ENCODE measurements at regions of chr1 and their contacts with region 1.

Region 1: GRCh38 chr1:84772428-84772943 is 82.2 kb upstream of the SSX2IP start:
- ATAC-seq: peak; percentile 81 to 98 (median 94)
- H3K4me3 ChIP-seq: no peak overlapping the region
- H3K27ac ChIP-seq: no peak overlapping the region
- H3K4me1 ChIP-seq: peaks cover 19 to 22% of the 10 kb centered on the region in 2 donors

Region 2: DNA sequence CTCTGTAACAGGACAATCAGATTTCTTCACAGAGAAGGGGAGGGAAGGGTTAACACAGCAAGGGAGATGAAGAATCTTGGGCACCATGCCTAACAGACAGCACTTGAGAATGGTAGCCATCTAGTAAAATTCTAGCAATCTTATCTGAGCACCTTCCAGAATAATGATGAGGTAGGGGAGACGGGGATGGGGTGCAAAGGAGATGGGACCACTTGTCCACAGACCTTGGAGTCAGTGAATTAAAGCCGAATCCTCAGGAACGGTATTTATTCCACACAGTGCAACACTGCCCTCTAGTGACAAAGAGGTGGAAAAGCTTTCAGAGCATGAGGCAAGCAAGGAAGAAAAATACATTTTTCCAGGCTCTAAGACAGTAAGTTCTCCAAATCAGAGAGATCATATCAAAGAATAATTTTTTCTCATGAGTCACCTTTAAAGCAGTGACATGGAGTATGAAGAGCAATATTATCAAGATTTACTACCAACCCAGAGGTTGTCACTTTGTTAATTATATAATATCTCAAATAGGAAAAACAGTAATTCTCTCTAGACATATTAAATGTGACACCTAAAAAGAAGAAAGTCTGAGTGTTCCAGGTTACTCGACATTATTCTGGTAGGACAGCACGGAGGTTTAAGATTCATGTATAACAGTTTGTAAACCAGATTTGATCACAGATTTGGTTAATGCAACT is 163.8 kb after region 1 on chr1:
- in situ Hi-C with region 1: loop called in 1 of 9 experiments (anchors 10 kb)
- ATAC-seq: peak; percentile 54 to 86 (median 79)
- H3K4me3 ChIP-seq: no peak overlapping the region
- H3K27ac ChIP-seq: no peak overlapping the region
- H3K4me1 ChIP-seq: peaks cover 5 to 13% of the 10 kb centered on the region in 2 donors

Region 3: DNA sequence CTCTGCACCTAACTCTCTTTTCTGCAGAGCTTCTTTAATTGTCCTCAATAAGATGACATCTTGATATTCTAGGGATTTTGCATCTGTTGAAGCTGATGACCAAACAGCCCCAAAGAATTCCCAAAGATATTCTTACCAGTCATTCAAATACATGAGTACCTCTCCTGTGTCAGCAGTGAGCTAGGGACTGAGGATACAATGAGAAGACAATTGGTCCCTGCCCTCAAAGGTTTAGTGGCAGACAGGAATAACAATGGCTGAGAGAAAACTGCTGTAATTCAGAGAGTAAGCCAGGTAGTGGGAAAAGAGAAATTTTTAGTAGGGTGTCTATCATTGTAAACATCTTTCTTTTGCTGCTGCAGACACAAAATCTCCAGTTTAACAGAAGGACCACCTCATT is 269.9 kb after region 1 on chr1:
- in situ Hi-C with region 1: no loop called
- ATAC-seq: no peak
- H3K4me3 ChIP-seq: no peak overlapping the region
- H3K27ac ChIP-seq: no peak overlapping the region
- H3K4me1 ChIP-seq: no peaks in the 10 kb centered on the region

Measured in motor neuron (in vitro differentiated cells).